PC-3 (cell line): ENCODE measurements at regions of chr1 and their contacts with region 1.

Region 1: DNA sequence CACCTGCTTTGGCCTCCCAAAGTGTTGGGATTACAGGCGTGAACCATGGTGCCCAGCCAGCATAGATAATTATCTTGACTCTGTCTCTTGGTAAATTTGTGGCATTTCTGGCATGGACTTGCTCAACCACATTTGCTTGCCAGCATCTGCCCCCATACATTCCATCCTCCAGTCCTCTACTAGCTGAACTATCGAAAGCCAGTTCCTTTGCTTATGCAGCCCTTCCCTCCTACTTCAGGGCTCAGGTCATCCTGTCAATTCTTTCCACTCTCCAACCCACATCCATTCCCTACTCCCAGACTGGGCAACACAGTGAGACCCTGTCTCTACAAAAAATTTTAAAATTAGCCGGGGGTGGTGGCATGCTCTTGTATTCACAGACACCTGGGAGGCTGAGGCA is 13.0 kb upstream of the UQCRHL start:
- DNase-seq: no peak
- ATAC-seq: no peak
- H3K4me3 ChIP-seq: no peak overlapping the region
- H3K27ac ChIP-seq: no peak overlapping the region
- H3K4me1 ChIP-seq: peaks cover 3% of the 10 kb centered on the region; the same call in 1 of the 2 replicates
- H3K27me3 ChIP-seq: no peaks in the 10 kb centered on the region
- CTCF ChIP-seq: no peak

Region 2: DNA sequence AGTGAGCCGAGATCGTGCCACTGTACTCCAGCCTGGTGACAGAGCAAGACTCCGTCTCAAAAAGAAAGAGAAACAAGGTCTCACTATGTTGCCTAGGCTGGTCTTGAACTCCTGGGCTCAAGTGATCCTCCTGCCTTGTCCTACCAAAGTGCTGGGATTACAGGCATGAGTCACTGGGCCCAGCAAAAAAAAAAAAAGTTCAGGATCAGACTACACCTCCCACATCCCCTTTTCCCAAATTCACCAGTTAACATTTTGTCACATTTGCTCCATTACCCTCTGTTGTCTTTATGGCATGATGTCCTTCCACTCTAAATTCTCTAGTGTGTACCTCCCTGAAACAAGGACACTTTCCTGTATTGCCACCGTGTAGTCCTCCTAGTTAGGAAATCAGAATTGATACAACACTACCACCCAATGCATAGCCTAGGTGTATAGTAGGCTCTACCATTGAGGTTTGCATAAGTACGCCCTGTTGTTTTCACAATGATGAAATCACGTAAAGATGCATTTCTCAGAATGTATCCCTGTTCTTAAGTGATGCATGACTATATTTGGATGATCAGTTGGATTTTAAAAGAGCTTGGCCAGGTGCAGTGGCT is 37.7 kb after region 1 on chr1:
- CTCF ChIA-PET with region 1: interaction called, 4 read pairs
- POLR2A ChIA-PET with region 1: interaction called, 11 read pairs
- intact Hi-C with region 1: no loop called
- DNase-seq: no peak
- ATAC-seq: no peak
- H3K4me3 ChIP-seq: no peak overlapping the region
- H3K27ac ChIP-seq: no peak overlapping the region
- H3K4me1 ChIP-seq: no peaks in the 10 kb centered on the region
- H3K27me3 ChIP-seq: no peaks in the 10 kb centered on the region
- CTCF ChIP-seq: no peak

Region 3: GRCh38 chr1:15902882-15903281 is 82.4 kb after region 1 on chr1:
- CTCF ChIA-PET with region 1: interaction called, 10 read pairs
- POLR2A ChIA-PET with region 1: no interaction called
- intact Hi-C with region 1: no loop called
- DNase-seq: peak; percentile 89
- ATAC-seq: peak; percentile 96
- H3K4me3 ChIP-seq: no peak overlapping the region; the same call in 1 of the 2 replicates
- H3K27ac ChIP-seq: peak overlapping the region; percentile 41
- H3K4me1 ChIP-seq: peaks cover 22% of the 10 kb centered on the region
- H3K27me3 ChIP-seq: no peaks in the 10 kb centered on the region
- CTCF ChIP-seq: no peak

Region 4: GRCh38 chr1:15994590-15995351 is 174.3 kb after region 1 on chr1:
- CTCF ChIA-PET with region 1: no interaction called
- POLR2A ChIA-PET with region 1: no interaction called
- intact Hi-C with region 1: loop called (anchors 1 kb)
- DNase-seq: peak; percentile 68
- ATAC-seq: peak; percentile 93
- H3K4me3 ChIP-seq: no peak overlapping the region
- H3K27ac ChIP-seq: no peak overlapping the region
- H3K4me1 ChIP-seq: no peaks in the 10 kb centered on the region
- H3K27me3 ChIP-seq: no peaks in the 10 kb centered on the region
- CTCF ChIP-seq: peak; percentile 84